ENCODE measurements at regions of chr5 and their contacts with region 1.

Region 1: DNA sequence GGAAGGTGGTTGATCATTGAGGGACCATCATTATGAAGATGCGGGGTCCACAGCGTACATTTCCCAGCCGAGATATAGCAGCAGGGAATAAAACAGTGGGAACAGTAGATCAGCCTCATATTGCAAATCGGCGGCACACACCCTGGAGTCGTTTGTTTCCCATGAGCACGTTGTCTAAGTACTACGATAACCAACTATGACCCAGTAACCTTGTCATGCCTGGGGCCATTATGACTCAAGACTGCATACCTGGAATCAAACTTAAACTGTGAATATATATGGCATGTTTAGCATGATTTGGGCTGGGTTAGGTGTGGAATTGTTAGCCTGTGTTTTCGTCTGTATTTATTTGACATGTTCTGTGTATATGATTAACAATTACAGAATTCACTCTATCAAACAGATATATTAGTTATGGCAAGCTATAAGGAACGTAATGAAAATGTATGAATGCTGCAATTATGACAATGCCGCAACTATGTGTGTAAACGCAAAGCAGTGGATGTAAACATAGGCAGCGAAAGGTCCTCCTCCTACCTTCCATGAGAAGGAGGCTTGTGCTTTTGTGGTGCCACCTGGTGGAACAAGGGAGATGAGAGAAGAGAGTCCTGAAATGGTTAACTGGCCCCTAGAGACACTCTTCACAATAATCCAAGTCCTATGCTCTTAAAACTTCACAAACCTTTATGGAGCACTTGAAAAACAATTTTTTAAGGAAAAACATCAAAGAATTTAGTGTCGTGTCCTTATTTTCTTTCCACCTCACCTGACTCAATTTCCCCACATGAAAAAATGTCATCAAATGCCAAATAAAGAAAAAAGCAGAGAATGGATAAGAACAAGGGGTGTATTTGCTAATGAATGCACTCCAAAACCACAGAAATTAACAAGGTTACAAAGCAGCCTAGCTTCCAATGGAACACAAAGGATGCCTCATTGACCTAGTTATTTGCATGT is 47.1 kb downstream of the SEMA5A start:
- DNase-seq: no peak
- ATAC-seq: no peak
- H3K4me3 ChIP-seq: no peak overlapping the region
- H3K27ac ChIP-seq: peak overlapping the region in 1 of 10 donors; percentile 28
- H3K4me1 ChIP-seq: peaks cover 0 to 66% (median 34%) of the 10 kb centered on the region in 9 donors
- H3K27me3 ChIP-seq: no peaks in the 10 kb centered on the region
- CTCF ChIP-seq: peak in 7 of 9 donors; percentile 13 to 45 (median 30)

Region 2: DNA sequence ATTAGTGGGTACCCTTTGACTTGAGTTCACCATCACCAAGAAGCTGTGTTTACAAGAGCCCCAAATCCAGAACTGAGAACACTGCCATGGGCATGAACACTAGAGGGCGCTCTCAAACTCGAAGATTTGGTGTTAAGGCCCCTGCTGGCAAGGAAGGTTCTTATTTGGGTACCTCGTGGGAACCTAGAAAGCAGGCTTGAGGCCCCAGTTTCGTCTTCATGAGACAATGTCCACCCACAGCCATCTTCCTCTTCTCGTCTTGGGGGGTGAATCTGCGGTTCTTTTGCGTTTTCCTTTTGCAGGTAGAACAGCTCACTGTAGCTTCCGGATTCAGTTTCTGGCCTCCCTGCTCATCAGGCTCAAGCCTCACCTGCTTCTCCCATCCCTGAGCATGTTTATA is 137.0 kb before region 1 on chr5:
- intact Hi-C with region 1: loop called in 1 of 10 experiments (anchors 10 kb)
- DNase-seq: peak in 1 of 2 donors; percentile 36
- ATAC-seq: peak in 5 of 8 donors; percentile 15 to 76 (median 44)
- H3K4me3 ChIP-seq: no peak overlapping the region
- H3K27ac ChIP-seq: peak overlapping the region in 1 of 10 donors; percentile 13
- H3K4me1 ChIP-seq: peaks cover 0 to 36% (median 24%) of the 10 kb centered on the region in 9 donors
- H3K27me3 ChIP-seq: no peaks in the 10 kb centered on the region
- CTCF ChIP-seq: peak; percentile 35 to 64 (median 57)

Region 3: DNA sequence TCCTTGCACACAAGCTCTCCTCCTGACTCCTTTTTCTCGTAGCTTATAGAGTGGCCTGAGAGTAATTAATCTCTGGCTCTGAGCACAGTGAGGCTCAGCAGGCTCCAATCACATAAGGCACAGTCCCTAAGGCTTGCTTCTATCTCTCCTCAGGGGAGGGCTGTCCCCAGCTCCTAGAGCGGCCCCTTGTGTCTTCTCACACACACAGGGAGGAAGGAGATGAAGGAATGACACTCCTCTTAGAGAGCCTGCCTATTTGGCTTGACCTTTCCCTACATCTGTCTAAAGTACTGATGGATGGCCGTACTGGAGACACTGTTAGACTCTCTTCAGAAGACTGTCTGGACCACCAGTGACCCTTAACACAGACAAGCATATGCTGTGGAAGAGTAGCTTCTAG is 118.4 kb after region 1 on chr5:
- intact Hi-C with region 1: loop called in 1 of 10 experiments (anchors 5 kb)
- DNase-seq: no peak
- ATAC-seq: peak in 5 of 8 donors; percentile 20 to 53 (median 26)
- H3K4me3 ChIP-seq: no peak overlapping the region
- H3K27ac ChIP-seq: no peak overlapping the region
- H3K4me1 ChIP-seq: peaks cover 0 to 28% (median 12%) of the 10 kb centered on the region in 9 donors
- H3K27me3 ChIP-seq: no peaks in the 10 kb centered on the region
- CTCF ChIP-seq: no peak

Measured in heart right ventricle (tissue), 16 donors.